ENCODE measurements at regions of chr19 and their contacts with region 1.

Region 1: GRCh38 chr19:15125232-15126067 is 18.2 kb downstream of the SYDE1 start:
- DNase-seq: peak; percentile 99
- ATAC-seq: peak; percentile 91
- H3K4me3 Mint-ChIP-seq: peak overlapping the region; percentile 87
- H3K27ac Mint-ChIP-seq: peak overlapping the region; percentile 96
- H3K4me1 Mint-ChIP-seq: peaks cover 32% of the 10 kb centered on the region
- H3K27me3 Mint-ChIP-seq: no peaks in the 10 kb centered on the region

Region 2: GRCh38 chr19:14571695-14572490 is 553.6 kb before region 1 on chr19 and contains the start of gene NDUFB7:
- CTCF ChIA-PET with region 1: no interaction called
- POLR2A ChIA-PET with region 1: no interaction called
- intact Hi-C with region 1: loop called in 1 of 2 experiments (anchors 5 kb)
- DNase-seq: peak; percentile 95
- ATAC-seq: peak; percentile 95
- H3K4me3 Mint-ChIP-seq: peak within 1 kb of the TSS; percentile 95
- H3K27ac Mint-ChIP-seq: peak within 1 kb of the TSS; percentile 92
- H3K4me1 Mint-ChIP-seq: peaks cover 36% of the 10 kb centered on the region
- H3K27me3 Mint-ChIP-seq: no peaks in the 10 kb centered on the region
- total RNA-seq, gene NDUFB7: 112 to 121 TPM

Region 3: GRCh38 chr19:15107061-15108010 is 18.1 kb before region 1 on chr19 and contains the start of gene SYDE1:
- CTCF ChIA-PET with region 1: interaction called, 9 read pairs
- POLR2A ChIA-PET with region 1: interaction called, 3 read pairs
- intact Hi-C with region 1: loop called in 1 of 2 experiments (anchors 1 kb)
- DNase-seq: peak; percentile 76
- ATAC-seq: peak; percentile 81
- H3K4me3 Mint-ChIP-seq: peak within 1 kb of the TSS; percentile 72
- H3K27ac Mint-ChIP-seq: peak within 1 kb of the TSS; percentile 76
- H3K4me1 Mint-ChIP-seq: peaks cover 14% of the 10 kb centered on the region
- H3K27me3 Mint-ChIP-seq: peaks cover 10% of the 10 kb centered on the region
- total RNA-seq, gene SYDE1: 2.1 to 3.3 TPM

Region 4: DNA sequence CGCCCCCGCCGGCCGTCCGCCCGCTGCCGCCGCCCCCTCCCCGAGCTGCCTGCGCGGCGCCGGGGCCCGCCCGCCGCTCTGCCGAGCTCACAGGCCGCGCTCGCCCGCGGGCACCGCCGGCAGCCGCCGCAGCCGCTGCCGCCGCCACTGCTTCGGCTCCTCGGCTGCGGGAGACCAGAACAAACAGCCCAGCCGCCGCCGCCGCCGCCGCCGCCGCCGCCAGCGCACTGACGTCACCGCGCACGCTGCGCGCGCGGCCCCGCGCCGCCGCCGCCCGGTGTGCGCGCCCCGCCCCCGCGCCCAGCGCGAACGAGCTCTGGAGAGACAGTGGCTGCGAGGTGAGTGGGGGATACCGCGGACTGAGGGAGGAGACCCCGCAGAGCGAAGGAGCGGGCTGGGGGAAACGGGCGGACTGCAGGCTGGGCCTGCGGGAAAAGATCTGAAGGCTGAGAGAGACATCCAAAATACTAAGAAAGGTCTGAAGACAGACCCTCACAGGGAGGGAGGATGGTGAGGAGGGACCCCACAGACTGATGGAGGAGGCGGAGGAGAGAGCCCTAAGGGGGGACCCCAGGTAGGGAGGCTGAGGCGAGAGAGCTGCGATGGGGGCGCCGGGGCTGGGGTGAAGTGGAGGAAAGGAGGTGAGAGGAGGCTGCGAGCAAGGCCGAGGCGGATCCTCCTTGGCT is 207.0 kb after region 1 on chr19 and contains the start of gene BRD4:
- CTCF ChIA-PET with region 1: interaction called, 3 read pairs
- POLR2A ChIA-PET with region 1: no interaction called
- intact Hi-C with region 1: loop called in 1 of 2 experiments (anchors 2 kb)
- DNase-seq: peak; percentile 87
- ATAC-seq: peak; percentile 43
- H3K4me3 Mint-ChIP-seq: peak within 1 kb of the TSS; percentile 94
- H3K27ac Mint-ChIP-seq: peak within 1 kb of the TSS; percentile 96
- H3K4me1 Mint-ChIP-seq: peaks cover 38% of the 10 kb centered on the region
- H3K27me3 Mint-ChIP-seq: no peaks in the 10 kb centered on the region
- total RNA-seq, gene BRD4: 106 to 126 TPM

Region 5: GRCh38 chr19:15466851-15467733 is 341.6 kb after region 1 on chr19:
- CTCF ChIA-PET with region 1: no interaction called
- POLR2A ChIA-PET with region 1: no interaction called
- intact Hi-C with region 1: loop called in 1 of 2 experiments (anchors 1 kb)
- DNase-seq: peak; percentile 80
- ATAC-seq: peak; percentile 62
- H3K4me3 Mint-ChIP-seq: peak overlapping the region; percentile 47
- H3K27ac Mint-ChIP-seq: peak overlapping the region; percentile 95
- H3K4me1 Mint-ChIP-seq: peaks cover 62% of the 10 kb centered on the region
- H3K27me3 Mint-ChIP-seq: peaks cover 3% of the 10 kb centered on the region

Region 6: DNA sequence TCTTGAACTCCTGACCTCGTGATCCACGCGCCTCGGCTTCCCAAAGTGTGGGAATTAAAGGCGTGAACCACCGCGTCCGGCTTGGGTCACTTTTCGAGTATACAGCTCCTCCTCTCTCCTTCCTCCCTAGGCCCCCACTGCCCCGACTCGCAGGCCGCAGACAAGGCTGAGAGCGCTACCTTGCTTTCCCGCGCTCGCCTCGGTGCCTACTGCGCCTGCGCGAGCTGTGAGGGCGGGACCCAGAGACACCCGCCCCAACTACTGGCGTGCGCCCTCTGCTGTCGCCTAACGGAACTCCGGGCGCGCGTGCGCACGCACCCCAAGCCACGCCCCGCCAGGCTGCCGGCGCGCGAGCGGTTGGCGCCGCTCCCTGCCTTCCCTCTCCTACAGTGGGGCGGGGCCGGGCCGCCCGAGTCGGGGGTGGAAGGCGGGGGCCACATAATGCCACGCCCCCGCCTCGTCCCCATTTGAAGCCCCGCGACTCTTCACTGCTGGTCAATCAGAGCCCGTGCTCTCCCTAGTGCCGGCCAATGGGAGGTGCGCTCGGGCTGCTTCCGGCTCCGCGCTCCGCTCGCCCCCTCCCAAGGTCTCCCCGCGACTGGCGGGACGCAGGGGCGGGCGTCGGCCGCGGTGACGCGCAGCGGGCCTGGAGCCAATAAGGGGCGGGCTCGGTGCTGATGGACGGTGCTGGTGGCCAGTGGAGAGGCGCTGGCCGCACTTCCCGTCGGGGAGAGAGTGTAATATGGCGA is 985.9 kb after region 1 on chr19 and contains the start of gene RAB8A:
- CTCF ChIA-PET with region 1: no interaction called
- POLR2A ChIA-PET with region 1: no interaction called
- intact Hi-C with region 1: loop called in 1 of 2 experiments (anchors 1 kb)
- DNase-seq: peak; percentile 99
- ATAC-seq: peak; percentile 96
- H3K4me3 Mint-ChIP-seq: peak within 1 kb of the TSS; percentile 96
- H3K27ac Mint-ChIP-seq: peak within 1 kb of the TSS; percentile 97
- H3K4me1 Mint-ChIP-seq: peaks cover 39% of the 10 kb centered on the region
- H3K27me3 Mint-ChIP-seq: no peaks in the 10 kb centered on the region
- total RNA-seq, gene RAB8A: 165 to 218 TPM